PC-9 (cell line): ENCODE measurements at regions of chr16 and their contacts with region 1.

Region 1: GRCh38 chr16:89395141-89395874 is 95.1 kb downstream of the ANKRD11 start:
- DNase-seq: peak; percentile 88 to 92
- H3K4me3 ChIP-seq: peak overlapping the region; percentile 10; the same call in 1 of the 2 replicates
- H3K27ac ChIP-seq: peak overlapping the region; percentile 39
- H3K4me1 ChIP-seq: peaks cover 23% of the 10 kb centered on the region
- H3K27me3 ChIP-seq: no peaks in the 10 kb centered on the region
- CTCF ChIP-seq: no peak

Region 2: DNA sequence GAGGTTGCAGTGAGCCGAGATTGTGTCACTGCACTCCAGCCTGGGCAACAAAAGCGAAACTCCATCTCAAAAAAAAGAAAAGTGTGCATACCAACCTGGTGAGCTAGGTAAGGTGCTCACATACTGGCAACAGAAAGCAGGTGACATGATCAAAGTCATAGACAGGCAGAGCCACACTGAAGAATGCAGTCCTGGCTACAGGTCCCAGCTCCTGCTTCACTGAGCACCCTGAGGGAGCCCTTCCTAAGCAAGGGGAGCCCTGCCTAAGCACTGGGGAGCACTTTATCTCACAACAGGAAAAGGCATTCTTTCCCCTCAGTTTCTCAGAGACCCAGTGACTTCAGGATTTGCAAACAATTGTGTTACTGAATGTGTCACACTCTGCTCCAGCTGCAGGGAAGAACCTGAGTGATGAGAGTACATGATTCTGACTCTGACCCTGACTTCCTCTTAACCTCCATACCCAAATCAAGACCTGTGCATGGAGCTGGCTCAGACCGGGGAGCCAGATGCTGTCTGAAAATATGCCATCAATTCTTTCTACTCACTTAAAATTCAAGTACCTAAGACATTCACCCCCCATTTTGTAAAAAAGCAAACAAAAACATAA is 54.5 kb after region 1 on chr16:
- CTCF ChIA-PET with region 1: no interaction called
- POLR2A ChIA-PET with region 1: interaction called, 12 read pairs
- intact Hi-C with region 1: no loop called
- DNase-seq: peak; percentile 53 to 61
- H3K4me3 ChIP-seq: no peak overlapping the region
- H3K27ac ChIP-seq: no peak overlapping the region
- H3K4me1 ChIP-seq: peaks cover 45% of the 10 kb centered on the region
- H3K27me3 ChIP-seq: no peaks in the 10 kb centered on the region
- CTCF ChIP-seq: no peak

Region 3: DNA sequence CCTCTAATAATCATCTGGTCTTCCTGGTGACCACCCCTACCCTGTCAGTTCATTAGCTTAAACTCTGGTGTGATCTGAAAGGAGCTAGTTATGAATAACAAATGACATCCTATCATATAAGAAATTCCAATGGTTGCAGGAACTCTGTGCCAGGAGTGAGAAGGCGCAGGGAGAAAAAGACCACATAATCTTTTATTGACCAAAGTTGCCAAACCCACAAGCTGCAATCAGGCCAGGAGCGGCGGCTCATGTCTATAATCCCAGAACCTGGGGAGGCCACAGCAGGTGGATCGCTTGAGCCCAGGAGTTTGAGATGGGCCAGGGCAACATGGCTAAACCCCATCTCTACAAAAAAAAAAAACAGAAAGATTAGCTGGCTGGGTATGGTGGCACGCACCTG is 71.6 kb after region 1 on chr16:
- CTCF ChIA-PET with region 1: no interaction called
- POLR2A ChIA-PET with region 1: no interaction called
- intact Hi-C with region 1: no loop called
- DNase-seq: no peak
- H3K4me3 ChIP-seq: no peak overlapping the region
- H3K27ac ChIP-seq: no peak overlapping the region
- H3K4me1 ChIP-seq: peaks cover 12% of the 10 kb centered on the region
- H3K27me3 ChIP-seq: no peaks in the 10 kb centered on the region
- CTCF ChIP-seq: no peak

Region 4: DNA sequence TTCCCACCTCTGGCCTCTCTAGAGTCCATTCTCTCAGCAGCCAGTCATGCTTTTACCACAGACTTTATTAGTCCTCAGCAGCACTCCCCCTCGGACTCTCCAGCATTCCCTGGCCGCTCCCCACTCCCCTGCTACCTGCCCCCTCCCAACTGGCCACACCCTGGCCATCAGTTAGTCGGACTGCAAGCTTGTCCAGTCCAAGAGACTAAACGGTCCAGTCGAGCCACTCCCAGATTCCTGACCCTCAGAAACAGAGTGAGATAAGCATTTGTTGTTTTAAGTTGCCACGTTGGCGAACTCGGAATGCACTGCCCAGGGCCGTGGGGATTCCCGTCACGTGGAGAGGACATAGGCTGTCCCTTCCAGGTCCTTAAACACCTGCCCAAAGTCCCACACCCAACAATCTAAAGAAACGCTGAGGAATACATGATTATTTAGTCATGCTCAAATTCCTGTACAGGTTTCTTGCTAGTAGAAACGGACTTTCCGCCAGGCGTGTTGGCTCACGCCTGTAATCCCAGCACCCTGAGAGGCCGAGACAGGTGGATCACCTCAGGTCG is 107.1 kb after region 1 on chr16:
- CTCF ChIA-PET with region 1: no interaction called
- POLR2A ChIA-PET with region 1: no interaction called
- intact Hi-C with region 1: loop called (anchors 1 kb)
- DNase-seq: peak; percentile 96 to 99
- H3K4me3 ChIP-seq: no peak overlapping the region; the same call in 1 of the 2 replicates
- H3K27ac ChIP-seq: peak overlapping the region; percentile 77
- H3K4me1 ChIP-seq: peaks cover 48% of the 10 kb centered on the region
- H3K27me3 ChIP-seq: no peaks in the 10 kb centered on the region
- CTCF ChIP-seq: no peak

Region 5: DNA sequence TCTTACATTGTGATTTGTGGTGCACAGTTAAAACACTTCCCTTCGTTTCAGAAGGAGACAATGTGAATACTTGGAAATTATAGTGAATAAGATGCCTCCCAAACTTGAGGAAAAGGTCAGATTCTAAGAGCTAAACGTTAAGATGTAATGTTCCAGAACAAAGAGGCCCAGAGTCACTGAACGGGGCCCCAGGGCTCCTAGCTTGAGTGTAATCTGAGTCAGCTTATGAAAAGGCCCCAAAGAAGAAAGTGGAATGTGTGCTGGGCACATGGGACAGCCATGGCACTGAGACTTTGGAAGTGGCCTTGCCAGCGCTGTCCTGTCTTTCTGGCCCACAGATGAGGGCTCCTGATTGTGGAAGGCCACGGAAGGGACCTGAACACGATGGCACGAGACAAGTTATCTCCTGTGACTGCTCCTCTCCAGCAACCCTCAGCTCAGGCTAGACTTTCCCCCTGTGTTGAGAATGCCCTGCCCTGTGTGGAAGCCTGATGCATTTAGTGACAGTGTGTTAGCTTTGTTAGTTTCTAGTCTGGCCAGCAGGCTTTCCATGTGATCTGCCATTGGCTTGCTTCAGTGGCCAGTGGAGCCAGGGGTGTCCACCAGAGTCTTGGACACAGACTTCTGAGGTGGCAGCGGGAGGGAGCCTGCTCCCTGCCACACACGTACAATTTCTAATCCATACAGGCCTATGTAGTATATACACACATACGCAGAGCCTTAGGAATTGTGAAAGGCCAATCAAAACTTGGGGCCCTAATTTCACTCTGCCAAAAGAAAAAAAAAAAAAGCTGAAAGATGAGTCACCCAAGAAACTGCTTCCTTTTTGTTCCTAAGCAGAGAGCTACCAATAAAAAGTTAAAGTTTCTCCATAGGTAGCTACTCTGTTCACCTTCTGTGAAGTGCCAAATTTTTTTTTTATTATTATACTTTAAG is 275.5 kb after region 1 on chr16:
- CTCF ChIA-PET with region 1: interaction called, 16 read pairs
- POLR2A ChIA-PET with region 1: no interaction called
- intact Hi-C with region 1: no loop called
- DNase-seq: no peak
- H3K4me3 ChIP-seq: no peak overlapping the region
- H3K27ac ChIP-seq: no peak overlapping the region
- H3K4me1 ChIP-seq: 0 out of 2 replicates have a peak, but pooled peaks cover 4% of the 10 kb centered on the region
- H3K27me3 ChIP-seq: no peaks in the 10 kb centered on the region
- CTCF ChIP-seq: no peak